ENCODE measurements at regions of chr9 and their contacts with region 1.

Region 1: GRCh38 chr9:5832543-5833529 is at the start of gene ERMP1:
- DNase-seq: peak; percentile 93
- H3K4me3 Mint-ChIP-seq: peak within 1 kb of the TSS; percentile 93
- H3K27ac Mint-ChIP-seq: peak within 1 kb of the TSS; percentile 89
- H3K4me1 Mint-ChIP-seq: peaks cover 43% of the 10 kb centered on the region
- H3K27me3 Mint-ChIP-seq: no peaks in the 10 kb centered on the region
- total RNA-seq, gene ERMP1: 23.5 to 27.1 TPM

Region 2: GRCh38 chr9:5450359-5451091 is 382.3 kb before region 1 on chr9 and contains the start of gene CD274:
- CTCF ChIA-PET with region 1: no interaction called
- intact Hi-C with region 1: loop called (anchors 2 kb)
- DNase-seq: peak; percentile 83
- H3K4me3 Mint-ChIP-seq: peak within 1 kb of the TSS; percentile 89
- H3K27ac Mint-ChIP-seq: peak within 1 kb of the TSS; percentile 92
- H3K4me1 Mint-ChIP-seq: peaks cover 65% of the 10 kb centered on the region
- H3K27me3 Mint-ChIP-seq: no peaks in the 10 kb centered on the region
- total RNA-seq, gene CD274: 14.2 to 15.0 TPM

Region 3: DNA sequence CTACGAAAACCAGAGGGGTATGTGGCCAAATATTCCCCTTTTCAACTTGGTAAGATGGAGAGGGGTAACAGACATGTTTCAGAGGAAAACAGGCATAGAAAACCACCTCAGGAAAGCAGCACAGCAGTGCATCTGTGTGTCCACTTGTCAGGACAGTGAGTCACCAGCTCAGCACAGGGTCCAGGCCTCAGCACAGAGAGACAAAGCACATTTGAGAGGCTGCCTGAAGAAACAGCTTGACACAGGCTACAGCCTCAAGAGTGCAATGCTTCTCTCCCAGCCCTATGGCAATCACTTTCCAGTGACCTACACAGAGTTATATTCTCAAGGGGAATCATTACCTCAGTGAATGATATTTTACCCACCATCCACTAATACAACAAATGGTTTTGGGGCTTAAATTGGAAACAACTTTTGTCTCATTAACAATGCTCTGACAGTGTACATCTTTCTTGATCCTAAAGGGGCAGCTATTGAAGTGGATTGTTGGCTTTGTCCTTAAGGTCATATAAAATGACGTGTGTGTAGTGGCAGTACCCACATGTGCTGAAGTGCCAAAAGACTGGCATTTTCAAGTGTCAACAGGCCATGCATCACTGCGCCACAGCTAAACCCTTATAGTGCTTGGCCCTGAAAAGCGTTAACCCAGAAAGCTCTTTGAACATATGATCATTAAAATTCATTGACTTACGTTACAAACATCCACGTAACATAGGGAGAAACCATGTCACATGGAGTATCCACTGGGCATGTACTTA is 46.3 kb before region 1 on chr9:
- CTCF ChIA-PET with region 1: no interaction called
- intact Hi-C with region 1: loop called (anchors 2 kb)
- DNase-seq: no peak
- H3K4me3 Mint-ChIP-seq: no peak overlapping the region
- H3K27ac Mint-ChIP-seq: peak overlapping the region; percentile 75
- H3K4me1 Mint-ChIP-seq: peaks cover 41% of the 10 kb centered on the region
- H3K27me3 Mint-ChIP-seq: no peaks in the 10 kb centered on the region

Region 4: GRCh38 chr9:5843794-5844504 is 11.1 kb after region 1 on chr9:
- CTCF ChIA-PET with region 1: interaction called, 30 read pairs
- intact Hi-C with region 1: no loop called
- DNase-seq: peak; percentile 39
- H3K4me3 Mint-ChIP-seq: peak overlapping the region; percentile 33
- H3K27ac Mint-ChIP-seq: peak overlapping the region; percentile 74
- H3K4me1 Mint-ChIP-seq: peaks cover 57% of the 10 kb centered on the region
- H3K27me3 Mint-ChIP-seq: no peaks in the 10 kb centered on the region

Region 5: GRCh38 chr9:6008169-6008979 is 175.5 kb after region 1 on chr9:
- CTCF ChIA-PET with region 1: no interaction called
- intact Hi-C with region 1: loop called (anchors 1 kb)
- DNase-seq: peak; percentile 98
- H3K4me3 Mint-ChIP-seq: peak overlapping the region; percentile 76
- H3K27ac Mint-ChIP-seq: peak overlapping the region; percentile 82
- H3K4me1 Mint-ChIP-seq: peaks cover 61% of the 10 kb centered on the region
- H3K27me3 Mint-ChIP-seq: no peaks in the 10 kb centered on the region